AG04450 (cell line): ENCODE measurements at regions of chr5 and their contacts with region 1.

Region 1: GRCh38 chr5:173454754-173455614 is 126.8 kb upstream of the STC2 start:
- DNase-seq: peak; percentile 96
- H3K4me3 ChIP-seq: no peak overlapping the region
- H3K27ac ChIP-seq: peak overlapping the region; percentile 98
- H3K27me3 ChIP-seq: no peaks in the 10 kb centered on the region
- CTCF ChIP-seq: no peak

Region 2: GRCh38 chr5:173331956-173332479 is 123.0 kb before region 1 on chr5:
- CTCF ChIA-PET with region 1: interaction called, 4 read pairs
- POLR2A ChIA-PET with region 1: interaction called, 27 read pairs
- DNase-seq: no peak
- H3K4me3 ChIP-seq: no peak overlapping the region
- H3K27ac ChIP-seq: no peak overlapping the region
- H3K27me3 ChIP-seq: no peaks in the 10 kb centered on the region
- CTCF ChIP-seq: peak; percentile 90

Region 3: DNA sequence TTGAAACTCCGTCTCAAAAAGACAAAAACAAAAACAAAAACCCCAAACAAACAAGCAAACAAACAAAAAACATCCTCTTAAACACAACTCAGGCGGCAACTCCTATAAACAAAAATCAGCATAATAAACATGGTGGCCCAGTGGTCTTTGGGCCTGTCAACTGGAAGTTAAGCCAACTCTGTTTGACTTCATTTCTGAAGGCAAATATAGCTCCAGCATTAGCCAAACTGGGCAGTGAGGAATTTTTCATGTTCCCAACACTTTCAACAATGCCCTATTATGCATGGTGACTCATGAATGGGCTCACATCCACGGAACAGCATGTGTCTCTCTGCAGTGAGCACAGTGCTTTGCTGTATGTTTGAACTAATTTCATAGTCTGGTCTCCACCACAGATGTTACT is 17.2 kb after region 1 on chr5:
- CTCF ChIA-PET with region 1: interaction called, 4 read pairs
- POLR2A ChIA-PET with region 1: interaction called, 16 read pairs
- DNase-seq: peak; percentile 93
- H3K4me3 ChIP-seq: no peak overlapping the region
- H3K27ac ChIP-seq: peak overlapping the region; percentile 87
- H3K27me3 ChIP-seq: no peaks in the 10 kb centered on the region
- CTCF ChIP-seq: no peak